GM12878 (cell line): ENCODE measurements at regions of chr15 and their contacts with region 1.

Region 1: DNA sequence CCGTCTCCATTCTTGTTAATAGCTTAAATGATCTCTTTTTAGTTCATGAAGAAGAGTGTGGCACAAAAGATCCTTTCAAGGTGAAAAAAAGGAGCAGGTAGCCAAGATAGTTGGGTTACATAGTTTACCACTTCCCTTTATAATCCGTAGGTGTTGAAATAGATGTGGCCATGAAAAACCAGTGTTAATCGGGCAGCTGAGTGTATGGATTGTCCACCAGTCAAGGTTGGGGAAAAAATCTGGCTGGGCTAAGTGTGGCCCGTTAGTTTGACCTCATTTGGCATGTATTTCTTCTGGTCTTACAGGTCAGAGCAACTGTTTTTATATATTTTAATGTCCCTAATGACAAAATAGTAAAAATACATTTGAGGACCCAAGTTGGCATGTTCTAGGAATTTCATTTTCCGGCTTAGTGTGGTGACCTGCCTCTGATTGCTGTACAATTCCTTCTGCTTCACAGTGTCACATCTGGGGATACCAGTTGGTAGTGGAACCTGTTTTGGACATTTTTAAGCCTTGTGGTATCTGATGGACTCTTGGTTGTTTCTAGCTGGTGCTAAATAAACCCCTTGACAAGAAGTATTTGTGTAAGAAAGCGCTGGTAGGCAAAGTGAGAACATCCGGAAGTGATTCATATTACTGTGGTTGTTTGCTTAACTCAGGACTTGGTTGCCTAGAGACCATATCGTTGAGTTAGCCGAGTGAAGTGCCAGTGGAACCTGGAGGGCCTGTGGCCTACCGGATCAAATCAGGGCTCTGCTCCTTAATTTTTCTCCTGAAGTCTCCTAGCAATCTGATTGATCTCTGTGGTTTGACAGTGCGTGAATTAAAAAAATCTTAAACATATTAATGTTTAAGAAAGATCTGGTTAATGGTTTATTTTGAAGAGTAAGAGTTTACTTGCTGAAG is 12.6 kb downstream of the IQGAP1 start:
- DNase-seq: peak; percentile 62
- ATAC-seq: peak; percentile 99
- H3K4me3 ChIP-seq: peak overlapping the region; percentile 32; the same call in 1 of the 2 replicates
- H3K27ac ChIP-seq: peak overlapping the region; percentile 70
- H3K4me1 ChIP-seq: peaks cover 15% of the 10 kb centered on the region; the same call in 1 of the 2 replicates
- H3K27me3 ChIP-seq: no peaks in the 10 kb centered on the region
- CTCF ChIP-seq: no peak
- EP300 ChIP-seq: peak in 1 of 2 experiments; percentile 38; a peak in 1 of 4 replicates
- POLR2A ChIP-seq: no peak
- RAD21 ChIP-seq: peak; percentile 1; the same call in 1 of the 2 replicates

Region 2: DNA sequence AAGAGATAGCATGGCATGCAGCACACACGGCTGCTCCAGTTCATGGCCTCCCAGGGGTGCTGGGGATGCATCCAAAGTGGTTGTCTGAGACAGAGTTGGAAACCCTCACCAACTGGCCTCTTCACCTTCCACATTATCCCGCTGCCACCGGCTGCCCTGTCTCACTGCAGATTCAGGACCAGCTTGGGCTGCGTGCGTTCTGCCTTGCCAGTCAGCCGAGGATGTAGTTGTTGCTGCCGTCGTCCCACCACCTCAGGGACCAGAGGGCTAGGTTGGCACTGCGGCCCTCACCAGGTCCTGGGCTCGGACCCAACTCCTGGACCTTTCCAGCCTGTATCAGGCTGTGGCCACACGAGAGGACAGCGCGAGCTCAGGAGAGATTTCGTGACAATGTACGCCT is 171.7 kb before region 1 on chr15:
- CTCF ChIA-PET with region 1: no interaction called
- POLR2A ChIA-PET with region 1: no interaction called
- RAD21 ChIA-PET with region 1: no interaction called
- SMC1A ChIA-PET with region 1: no interaction called
- in situ Hi-C with region 1: no loop called
- intact Hi-C with region 1: no loop called
- DNase-seq: no peak
- ATAC-seq: no peak
- H3K4me3 ChIP-seq: no peak overlapping the region
- H3K27ac ChIP-seq: no peak overlapping the region
- H3K4me1 ChIP-seq: peaks cover 24% of the 10 kb centered on the region
- H3K27me3 ChIP-seq: no peaks in the 10 kb centered on the region
- CTCF ChIP-seq: no peak
- EP300 ChIP-seq: no peak
- POLR2A ChIP-seq: no peak; the same call in 1 of the 2 replicates
- RAD21 ChIP-seq: no peak

Region 3: GRCh38 chr15:90352109-90352893 is 48.4 kb before region 1 on chr15 and contains the start of gene ZNF774:
- CTCF ChIA-PET with region 1: no interaction called
- POLR2A ChIA-PET with region 1: no interaction called
- RAD21 ChIA-PET with region 1: no interaction called
- SMC1A ChIA-PET with region 1: no interaction called
- in situ Hi-C with region 1: no loop called
- intact Hi-C with region 1: no loop called
- DNase-seq: peak; percentile 91
- ATAC-seq: peak; percentile 100
- H3K4me3 ChIP-seq: peak within 1 kb of the TSS; percentile 79
- H3K27ac ChIP-seq: no peak within 1 kb of the TSS
- H3K4me1 ChIP-seq: peaks cover 4% of the 10 kb centered on the region; the same call in 1 of the 2 replicates
- H3K27me3 ChIP-seq: no peaks in the 10 kb centered on the region
- CTCF ChIP-seq: no peak
- EP300 ChIP-seq: no peak
- POLR2A ChIP-seq: peak; percentile 75
- RAD21 ChIP-seq: no peak
- polyA plus RNA-seq, gene ZNF774: 0.35 to 0.40 TPM

Region 4: GRCh38 chr15:90387537-90388461 is 12.9 kb before region 1 on chr15 and contains the start of gene IQGAP1:
- CTCF ChIA-PET with region 1: interaction called, 6 read pairs
- POLR2A ChIA-PET with region 1: interaction called, 51 read pairs
- RAD21 ChIA-PET with region 1: interaction called, 10 read pairs
- SMC1A ChIA-PET with region 1: interaction called, 34 read pairs
- in situ Hi-C with region 1: no loop called
- intact Hi-C with region 1: no loop called
- DNase-seq: peak; percentile 83
- ATAC-seq: peak; percentile 95
- H3K4me3 ChIP-seq: peak within 1 kb of the TSS; percentile 94
- H3K27ac ChIP-seq: peak within 1 kb of the TSS; percentile 91
- H3K4me1 ChIP-seq: peaks cover 4% of the 10 kb centered on the region; the same call in 1 of the 2 replicates
- H3K27me3 ChIP-seq: no peaks in the 10 kb centered on the region
- CTCF ChIP-seq: no peak
- EP300 ChIP-seq: no peak
- POLR2A ChIP-seq: peak; percentile 96
- RAD21 ChIP-seq: no peak
- polyA plus RNA-seq, gene IQGAP1: 65.2 to 66.6 TPM

Region 5: GRCh38 chr15:90412356-90413194 is 11.9 kb after region 1 on chr15:
- CTCF ChIA-PET with region 1: interaction called, 6 read pairs
- POLR2A ChIA-PET with region 1: interaction called, 5 read pairs
- RAD21 ChIA-PET with region 1: interaction called, 7 read pairs
- SMC1A ChIA-PET with region 1: interaction called, 14 read pairs
- in situ Hi-C with region 1: no loop called
- intact Hi-C with region 1: no loop called
- DNase-seq: peak; percentile 72
- ATAC-seq: peak; percentile 95
- H3K4me3 ChIP-seq: peak overlapping the region; percentile 8; the same call in 1 of the 2 replicates
- H3K27ac ChIP-seq: peak overlapping the region; percentile 45
- H3K4me1 ChIP-seq: peaks cover 23% of the 10 kb centered on the region
- H3K27me3 ChIP-seq: no peaks in the 10 kb centered on the region
- CTCF ChIP-seq: no peak
- EP300 ChIP-seq: no peak
- POLR2A ChIP-seq: no peak
- RAD21 ChIP-seq: no peak

Region 6: DNA sequence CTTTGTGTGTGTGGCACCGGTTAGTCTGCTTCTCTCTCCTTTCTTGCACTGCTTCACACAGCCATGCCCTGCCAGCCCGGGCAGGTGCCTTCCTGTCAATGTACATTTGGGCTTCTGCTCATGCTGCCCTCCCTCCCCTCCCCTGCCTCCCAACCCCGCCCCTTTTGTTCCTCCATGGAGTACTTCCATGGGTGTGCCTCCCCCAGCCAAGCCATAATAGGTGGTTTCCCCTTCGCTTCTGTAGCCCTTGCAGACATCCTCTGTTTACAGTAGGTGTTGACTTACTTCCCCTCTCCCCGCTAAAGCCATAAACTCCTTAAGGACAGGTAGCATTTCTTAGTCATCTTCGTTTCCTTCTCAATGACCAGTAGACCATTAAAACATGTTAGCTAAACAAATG is 97.3 kb after region 1 on chr15:
- CTCF ChIA-PET with region 1: no interaction called
- POLR2A ChIA-PET with region 1: interaction called, 10 read pairs
- RAD21 ChIA-PET with region 1: no interaction called
- SMC1A ChIA-PET with region 1: no interaction called
- in situ Hi-C with region 1: no loop called
- intact Hi-C with region 1: no loop called
- DNase-seq: no peak
- ATAC-seq: no peak
- H3K4me3 ChIP-seq: no peak overlapping the region
- H3K27ac ChIP-seq: no peak overlapping the region
- H3K4me1 ChIP-seq: no peaks in the 10 kb centered on the region
- H3K27me3 ChIP-seq: no peaks in the 10 kb centered on the region
- CTCF ChIP-seq: no peak
- EP300 ChIP-seq: no peak
- POLR2A ChIP-seq: no peak
- RAD21 ChIP-seq: no peak